ENCODE measurements at regions of chr20 and their contacts with region 1.

Region 1: DNA sequence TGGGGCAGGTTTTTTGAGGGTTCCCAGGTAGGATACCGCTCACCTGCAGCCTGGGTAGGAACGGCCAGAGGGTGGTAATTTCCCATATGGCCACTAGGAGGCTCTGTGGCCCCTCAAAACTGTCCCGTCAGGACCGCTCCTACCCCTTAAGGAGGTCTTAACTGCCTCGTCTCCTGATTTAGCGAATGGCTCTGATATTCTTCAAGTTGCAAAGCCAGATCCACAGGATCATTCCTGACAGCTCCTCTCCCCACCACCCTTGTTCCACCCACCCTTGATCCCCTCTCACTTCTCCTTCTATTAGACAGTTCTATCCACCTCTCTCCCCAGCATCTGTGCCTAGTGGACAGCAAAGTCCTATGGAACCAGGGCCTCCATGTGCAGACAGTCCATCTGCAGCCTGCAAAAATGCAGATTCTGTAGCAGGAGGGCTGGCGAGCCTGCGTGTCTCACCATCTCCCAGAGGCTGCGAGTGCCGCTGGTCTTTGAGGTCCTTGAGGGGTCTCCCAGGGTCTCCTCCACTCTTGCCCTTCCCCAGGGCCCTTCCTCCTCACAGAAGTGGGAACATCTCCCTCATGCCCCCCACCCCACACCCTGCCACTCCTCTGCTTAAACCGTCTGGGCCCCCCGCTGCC is 34.3 kb upstream of the ZBP1 start:
- DNase-seq: peak; percentile 21 to 45 (median 41)
- H3K4me3 ChIP-seq: no peak overlapping the region
- H3K4me3 Mint-ChIP-seq: no peak overlapping the region
- H3K27ac ChIP-seq: no peak overlapping the region
- H3K27ac Mint-ChIP-seq: no peak overlapping the region
- H3K4me1 ChIP-seq: no peaks in the 10 kb centered on the region
- H3K4me1 Mint-ChIP-seq: peaks cover 3% of the 10 kb centered on the region
- H3K27me3 ChIP-seq: no peaks in the 10 kb centered on the region
- H3K27me3 Mint-ChIP-seq: peaks cover 4 to 8% (median 8%) of the 10 kb centered on the region in 3 donors
- CTCF ChIP-seq: peak; percentile 92

Region 2: GRCh38 chr20:57351042-57351783 is 303.3 kb before region 1 on chr20 and contains the start of gene RAE1:
- intact Hi-C with region 1: no loop called
- DNase-seq: peak; percentile 85 to 91 (median 90)
- H3K4me3 ChIP-seq: peak within 1 kb of the TSS; percentile 78 to 96 (median 80)
- H3K4me3 Mint-ChIP-seq: peak within 1 kb of the TSS; percentile 89 to 92
- H3K27ac ChIP-seq: peak within 1 kb of the TSS; percentile 51 to 91
- H3K27ac Mint-ChIP-seq: peak within 1 kb of the TSS; percentile 84 to 92 (median 89)
- H3K4me1 ChIP-seq: peaks cover 10 to 14% of the 10 kb centered on the region in 2 donors
- H3K4me1 Mint-ChIP-seq: peaks cover 14% of the 10 kb centered on the region
- H3K27me3 ChIP-seq: peaks cover 6 to 8% of the 10 kb centered on the region in 2 donors
- H3K27me3 Mint-ChIP-seq: peaks cover 8 to 24% (median 18%) of the 10 kb centered on the region in 3 donors
- CTCF ChIP-seq: no peak
- polyA plus RNA-seq, gene RAE1: 15.8 to 27.5 (median 21.7) TPM

Region 3: DNA sequence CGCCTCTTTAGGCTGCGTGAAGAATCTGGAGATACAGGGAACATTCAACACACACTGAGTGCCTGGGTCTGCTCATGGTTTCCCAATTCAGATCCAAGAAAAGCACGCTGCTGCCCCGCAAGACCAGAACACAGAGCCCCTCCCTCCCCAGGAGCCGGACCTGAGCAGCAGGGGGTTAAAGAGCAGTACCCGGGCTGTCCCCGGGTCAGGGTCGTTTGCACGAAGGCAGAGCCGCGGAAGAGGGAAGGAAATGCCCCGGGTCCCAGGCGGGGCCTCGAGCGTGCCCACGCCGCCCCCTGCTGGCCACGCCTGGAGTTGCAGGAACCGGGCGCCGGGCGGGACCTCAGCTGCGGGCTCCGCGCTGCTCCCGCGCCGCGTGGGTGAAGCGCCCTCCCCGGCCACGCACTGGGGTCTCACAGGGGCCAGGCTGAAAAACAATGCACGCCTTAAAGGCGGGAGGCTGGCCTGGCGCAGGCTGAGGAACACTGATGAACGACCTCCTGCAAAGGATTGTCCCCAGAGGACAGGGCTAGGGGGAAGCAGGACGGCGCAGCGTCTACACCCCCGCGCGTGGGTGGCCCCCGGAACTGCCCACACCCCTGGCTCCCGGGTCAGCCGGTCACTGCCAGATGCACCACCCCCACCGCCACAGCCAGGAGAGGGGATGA is 525.1 kb after region 1 on chr20:
- intact Hi-C with region 1: loop called in 1 of 2 experiments (anchors 10 kb)
- DNase-seq: peak; percentile 32 to 55 (median 38)
- H3K4me3 ChIP-seq: peak overlapping the region in 1 of 3 experiments; percentile 56
- H3K4me3 Mint-ChIP-seq: peak overlapping the region; percentile 63 to 84
- H3K27ac ChIP-seq: no peak overlapping the region
- H3K27ac Mint-ChIP-seq: no peak overlapping the region
- H3K4me1 ChIP-seq: peaks cover 11% of the 10 kb centered on the region in 2 donors
- H3K4me1 Mint-ChIP-seq: peaks cover 9% of the 10 kb centered on the region
- H3K27me3 ChIP-seq: peaks cover 0 to 21% of the 10 kb centered on the region in 2 donors
- H3K27me3 Mint-ChIP-seq: peaks cover 20 to 33% (median 23%) of the 10 kb centered on the region in 3 donors
- CTCF ChIP-seq: peak; percentile 99

Measured in CD14-positive monocyte (primary cell).